Activated naive CD4-positive, alpha-beta T cell treated with anti-CD3 and anti-CD28 coated beads for 36 hours (primary cell): ENCODE measurements at regions of chr4 and their contacts with region 1.

Region 1: GRCh38 chr4:55948726-55949474 is at the start of gene CEP135:
- DNase-seq: peak; percentile 94
- H3K4me3 Mint-ChIP-seq: peak within 1 kb of the TSS; percentile 91
- H3K27ac Mint-ChIP-seq: peak within 1 kb of the TSS; percentile 94
- H3K4me1 Mint-ChIP-seq: peaks cover 35% of the 10 kb centered on the region
- H3K27me3 Mint-ChIP-seq: no peaks in the 10 kb centered on the region
- total RNA-seq, gene CEP135: 18.6 to 19.4 TPM

Region 2: GRCh38 chr4:55345980-55346850 is 602.7 kb before region 1 on chr4 and contains the start of gene SRD5A3:
- CTCF ChIA-PET with region 1: no interaction called
- intact Hi-C with region 1: loop called (anchors 5 kb)
- DNase-seq: peak; percentile 80
- H3K4me3 Mint-ChIP-seq: peak within 1 kb of the TSS; percentile 87
- H3K27ac Mint-ChIP-seq: peak within 1 kb of the TSS; percentile 90
- H3K4me1 Mint-ChIP-seq: peaks cover 20% of the 10 kb centered on the region
- H3K27me3 Mint-ChIP-seq: no peaks in the 10 kb centered on the region
- total RNA-seq, gene SRD5A3: 21.7 to 22.3 TPM

Region 3: DNA sequence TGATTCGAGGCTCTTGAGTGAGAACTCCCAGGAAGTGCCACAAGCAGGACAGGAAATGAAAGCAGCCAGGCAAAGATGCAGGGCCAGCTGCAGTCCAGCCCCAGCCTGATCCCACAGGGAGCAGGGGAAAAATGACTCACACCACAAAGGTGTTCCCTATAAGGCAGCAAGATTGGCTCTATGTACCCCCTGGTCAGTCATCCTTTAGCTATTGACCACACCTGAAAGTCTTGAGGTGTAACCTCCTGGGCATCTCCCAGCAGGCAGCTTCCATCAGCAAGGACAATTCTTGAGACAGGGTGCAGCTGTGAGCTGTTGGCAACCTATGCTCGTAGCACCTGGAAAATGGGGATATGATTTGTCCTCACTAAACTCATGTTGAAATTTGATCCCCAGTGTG is 157.2 kb before region 1 on chr4:
- CTCF ChIA-PET with region 1: no interaction called
- intact Hi-C with region 1: no loop called
- DNase-seq: no peak
- H3K4me3 Mint-ChIP-seq: no peak overlapping the region
- H3K27ac Mint-ChIP-seq: no peak overlapping the region
- H3K4me1 Mint-ChIP-seq: peaks cover 7% of the 10 kb centered on the region
- H3K27me3 Mint-ChIP-seq: peaks cover 38% of the 10 kb centered on the region

Region 4: GRCh38 chr4:55853484-55854046 is 95.3 kb before region 1 on chr4 and contains the start of gene EXOC1:
- CTCF ChIA-PET with region 1: interaction called, 3 read pairs
- intact Hi-C with region 1: loop called (anchors 1 kb)
- DNase-seq: peak; percentile 99
- H3K4me3 Mint-ChIP-seq: peak within 1 kb of the TSS; percentile 32
- H3K27ac Mint-ChIP-seq: peak within 1 kb of the TSS; percentile 86
- H3K4me1 Mint-ChIP-seq: peaks cover 28% of the 10 kb centered on the region
- H3K27me3 Mint-ChIP-seq: no peaks in the 10 kb centered on the region
- total RNA-seq, gene EXOC1: 18.7 to 21.9 TPM

Region 5: DNA sequence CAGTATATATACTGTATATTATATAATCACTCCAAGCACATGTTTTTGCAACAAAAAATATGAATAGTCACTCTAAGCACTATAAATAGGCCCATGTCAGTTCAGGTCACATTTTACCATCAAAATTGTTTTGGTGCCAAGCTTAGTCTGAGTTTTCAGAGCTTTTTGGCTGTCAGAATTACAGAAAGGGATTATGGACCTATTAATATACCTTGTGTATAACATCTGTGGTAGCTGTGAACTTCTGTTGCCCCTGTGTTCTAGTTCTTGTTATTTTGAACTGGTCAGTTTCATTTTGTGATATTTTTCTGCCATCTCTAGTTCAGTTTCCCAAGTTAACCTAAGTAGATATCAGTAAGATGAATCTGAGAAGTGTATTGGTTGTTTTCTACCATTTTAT is 72.5 kb before region 1 on chr4:
- CTCF ChIA-PET with region 1: no interaction called
- intact Hi-C with region 1: no loop called
- DNase-seq: no peak
- H3K4me3 Mint-ChIP-seq: no peak overlapping the region
- H3K27ac Mint-ChIP-seq: no peak overlapping the region
- H3K4me1 Mint-ChIP-seq: no peaks in the 10 kb centered on the region
- H3K27me3 Mint-ChIP-seq: no peaks in the 10 kb centered on the region

Region 6: DNA sequence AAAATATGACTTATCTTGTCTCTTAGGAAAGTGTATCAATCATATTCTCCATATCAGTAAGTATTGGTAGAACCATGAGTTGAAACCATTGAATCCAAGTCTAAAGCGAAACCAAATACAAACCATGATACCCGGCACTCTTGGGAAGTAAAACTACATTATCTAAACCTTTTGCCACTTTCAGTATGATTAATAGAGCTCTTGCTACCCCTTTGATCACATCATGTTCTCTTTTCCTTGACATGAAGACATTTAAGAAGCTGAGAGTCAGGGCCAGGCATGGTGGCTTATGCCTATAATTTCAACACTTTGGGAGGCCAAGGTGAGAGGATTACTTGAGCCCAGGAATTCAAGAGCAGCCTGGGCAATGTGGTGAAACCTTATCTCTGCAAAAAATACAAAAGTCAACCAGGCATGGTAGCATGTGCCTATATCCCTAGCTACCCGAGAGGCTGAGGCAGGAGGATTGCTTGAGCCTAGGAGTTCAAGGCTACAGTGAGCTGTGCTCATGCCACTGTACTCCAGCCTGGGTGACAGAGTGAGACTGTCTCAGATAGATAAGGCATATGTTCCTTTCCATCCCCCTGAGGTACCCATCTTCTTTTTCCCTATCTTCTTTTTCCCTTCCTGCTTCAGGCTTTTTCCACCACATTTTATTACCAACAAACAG is 45.2 kb after region 1 on chr4:
- CTCF ChIA-PET with region 1: interaction called, 8 read pairs
- intact Hi-C with region 1: loop called (anchors 1 kb)
- DNase-seq: peak; percentile 36
- H3K4me3 Mint-ChIP-seq: no peak overlapping the region
- H3K27ac Mint-ChIP-seq: peak overlapping the region; percentile 41
- H3K4me1 Mint-ChIP-seq: peaks cover 33% of the 10 kb centered on the region
- H3K27me3 Mint-ChIP-seq: no peaks in the 10 kb centered on the region

Region 7: DNA sequence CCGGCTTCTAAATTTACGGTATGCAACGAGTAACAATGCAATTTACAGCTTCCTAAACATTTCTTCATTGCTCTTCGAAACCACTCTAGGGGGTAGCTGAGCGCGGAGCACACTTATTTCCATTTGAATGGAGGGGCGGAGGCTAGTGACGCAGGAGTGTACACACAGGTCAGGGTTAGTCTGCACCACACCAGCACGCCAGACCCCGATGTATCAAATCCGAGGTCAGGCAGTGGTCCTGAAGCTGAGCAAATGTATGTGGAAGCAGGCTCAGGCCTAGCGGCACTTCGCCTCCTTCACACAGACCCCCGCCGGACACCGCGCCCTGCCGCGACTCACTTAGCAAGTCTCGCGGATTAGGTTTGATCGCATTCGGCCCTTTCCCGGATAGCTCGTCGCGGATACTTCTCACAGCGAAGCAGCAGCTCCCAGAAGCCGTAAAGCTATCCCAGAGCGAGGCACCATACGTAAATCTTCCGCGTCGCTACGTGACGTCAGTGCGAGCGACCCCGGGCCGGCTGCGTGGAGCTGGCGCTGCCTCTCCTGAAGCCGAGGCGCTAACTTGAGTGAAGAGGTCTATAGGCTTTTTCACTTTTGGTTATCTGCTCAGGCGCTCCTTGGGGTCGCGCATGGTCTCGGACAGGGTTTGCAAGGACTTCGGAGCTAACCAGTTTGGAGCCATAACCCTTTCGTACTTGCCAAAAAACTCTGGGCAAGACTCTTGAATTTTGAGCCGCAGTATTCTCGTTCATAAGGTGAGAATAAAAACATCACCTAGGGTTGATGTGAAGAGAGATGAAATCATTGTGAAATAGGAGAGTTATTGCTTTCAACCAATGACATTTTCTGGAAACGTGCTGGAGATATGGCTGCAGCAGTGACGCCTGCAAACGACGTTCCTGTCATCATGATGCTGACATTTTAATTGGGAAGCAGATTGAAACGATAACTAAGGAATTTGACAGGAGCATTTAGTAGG is 438.4 kb after region 1 on chr4 and contains the start of gene AASDH:
- CTCF ChIA-PET with region 1: interaction called, 4 read pairs
- intact Hi-C with region 1: loop called (anchors 1 kb)
- DNase-seq: peak; percentile 97
- H3K4me3 Mint-ChIP-seq: peak within 1 kb of the TSS; percentile 87
- H3K27ac Mint-ChIP-seq: peak within 1 kb of the TSS; percentile 95
- H3K4me1 Mint-ChIP-seq: peaks cover 39% of the 10 kb centered on the region
- H3K27me3 Mint-ChIP-seq: no peaks in the 10 kb centered on the region
- total RNA-seq, gene AASDH: 13.5 to 17.0 TPM

Region 8: DNA sequence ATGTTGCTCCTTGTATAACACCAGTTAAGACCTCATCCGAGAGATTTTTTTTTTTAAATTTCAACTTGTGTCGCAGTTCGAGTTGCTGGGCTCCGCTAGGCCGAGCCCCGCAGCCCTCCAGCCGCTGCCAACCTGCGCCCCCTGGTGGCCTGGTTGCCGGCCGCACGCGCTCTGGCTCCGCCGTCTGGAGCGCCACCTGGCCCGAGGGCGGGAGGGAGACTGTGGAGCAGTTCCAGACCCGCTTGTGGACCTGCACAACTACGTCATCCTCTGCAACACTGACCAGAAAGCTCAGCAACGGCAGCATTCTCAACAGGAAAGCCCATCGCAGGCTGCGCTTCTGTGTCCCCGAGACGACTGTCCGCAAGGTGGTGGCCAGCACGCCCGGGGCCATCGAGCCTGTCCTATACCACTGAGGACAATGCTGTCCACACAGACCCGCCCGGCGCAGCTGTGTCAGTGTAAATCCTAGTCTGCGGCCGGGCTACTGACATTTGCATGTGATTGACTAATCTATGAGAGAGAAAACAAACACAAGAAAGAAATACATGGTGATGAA is 595.8 kb after region 1 on chr4:
- CTCF ChIA-PET with region 1: no interaction called
- intact Hi-C with region 1: loop called (anchors 5 kb)
- DNase-seq: peak; percentile 86
- H3K4me3 Mint-ChIP-seq: peak overlapping the region; percentile 57
- H3K27ac Mint-ChIP-seq: no peak overlapping the region
- H3K4me1 Mint-ChIP-seq: peaks cover 14% of the 10 kb centered on the region
- H3K27me3 Mint-ChIP-seq: no peaks in the 10 kb centered on the region

Region 9: DNA sequence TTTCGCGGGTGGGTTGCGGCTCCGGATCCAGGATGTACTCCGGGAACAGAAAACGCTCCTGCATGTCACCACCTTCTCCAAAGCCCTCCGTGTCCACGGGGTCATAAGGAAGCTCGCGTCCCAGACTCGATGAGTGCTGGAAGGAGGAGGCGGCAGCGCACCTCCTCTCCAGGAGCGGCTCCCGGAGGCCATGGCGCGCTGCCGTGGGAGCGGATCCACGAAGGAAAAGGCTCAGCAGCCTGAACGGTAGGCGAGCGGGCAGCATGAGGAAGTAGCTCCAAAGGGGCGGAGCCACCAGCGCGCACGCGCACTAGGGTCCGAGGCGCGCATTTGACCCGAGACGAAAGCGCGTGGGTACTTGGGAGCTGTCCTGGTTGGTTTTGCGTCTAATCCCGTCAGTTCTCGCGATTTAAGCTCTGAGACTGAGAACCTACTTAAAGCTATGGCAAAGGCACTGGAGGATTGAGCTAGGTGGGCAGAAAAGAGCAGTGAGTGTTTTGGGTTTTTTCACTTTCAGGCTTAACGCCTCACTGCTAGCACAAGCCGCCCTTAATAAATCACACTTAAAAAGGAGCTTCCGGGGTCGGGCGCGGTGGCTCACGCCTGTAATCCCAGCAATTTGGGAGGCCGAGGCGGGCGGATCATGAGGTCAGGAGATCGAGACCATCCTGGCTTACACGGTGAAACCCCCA is 1028.6 kb after region 1 on chr4 and contains the start of gene NOA1:
- CTCF ChIA-PET with region 1: no interaction called
- intact Hi-C with region 1: loop called (anchors 2 kb)
- DNase-seq: peak; percentile 98
- H3K4me3 Mint-ChIP-seq: peak within 1 kb of the TSS; percentile 100
- H3K27ac Mint-ChIP-seq: peak within 1 kb of the TSS; percentile 99
- H3K4me1 Mint-ChIP-seq: peaks cover 51% of the 10 kb centered on the region
- H3K27me3 Mint-ChIP-seq: no peaks in the 10 kb centered on the region
- total RNA-seq, gene NOA1: 25.4 to 26.0 TPM